Activated T-helper 2 cell treated with anti-CD3 and anti-CD28 coated beads, Interferon-gamma antibody, Interleukin-2, Interleukin-4, amounts not matched to agents 10 μg/mL and 5 μg/mL and 100 μg/mL, durations not matched to agents 14 hours and 24 hours and 36 hours (primary cell): ENCODE measurements at regions of chr19 and their contacts with region 1.

Region 1: GRCh38 chr19:35204799-35205732 is 23.5 kb downstream of the FAM187B start:
- DNase-seq: no peak
- H3K4me3 Mint-ChIP-seq: no peak overlapping the region
- H3K27ac Mint-ChIP-seq: peak overlapping the region; percentile 91
- H3K4me1 Mint-ChIP-seq: peaks cover 56% of the 10 kb centered on the region
- H3K27me3 Mint-ChIP-seq: no peaks in the 10 kb centered on the region

Region 2: GRCh38 chr19:35154525-35155406 is 50.3 kb before region 1 on chr19 and contains the start of gene FXYD5:
- intact Hi-C with region 1: loop called (anchors 2 kb)
- DNase-seq: peak; percentile 54
- H3K4me3 Mint-ChIP-seq: peak within 1 kb of the TSS; percentile 100
- H3K27ac Mint-ChIP-seq: peak within 1 kb of the TSS; percentile 100
- H3K4me1 Mint-ChIP-seq: peaks cover 37% of the 10 kb centered on the region
- H3K27me3 Mint-ChIP-seq: peaks cover 6% of the 10 kb centered on the region
- total RNA-seq, gene FXYD5: 257 and 271 TPM in 2 replicates

Region 3: GRCh38 chr19:35184884-35185283 is 20.2 kb before region 1 on chr19:
- intact Hi-C with region 1: loop called (anchors 1 kb)
- DNase-seq: no peak
- H3K4me3 Mint-ChIP-seq: no peak overlapping the region
- H3K27ac Mint-ChIP-seq: no peak overlapping the region
- H3K4me1 Mint-ChIP-seq: peaks cover 6% of the 10 kb centered on the region
- H3K27me3 Mint-ChIP-seq: peaks cover 8% of the 10 kb centered on the region

Region 4: GRCh38 chr19:35236638-35237400 is 31.8 kb after region 1 on chr19:
- intact Hi-C with region 1: no loop called
- DNase-seq: no peak
- H3K4me3 Mint-ChIP-seq: no peak overlapping the region
- H3K27ac Mint-ChIP-seq: no peak overlapping the region
- H3K4me1 Mint-ChIP-seq: peaks cover 13% of the 10 kb centered on the region
- H3K27me3 Mint-ChIP-seq: peaks cover 18% of the 10 kb centered on the region